ENCODE measurements at regions of chr11 and their contacts with region 1.

Region 1: GRCh38 chr11:95150946-95151684 is 61.5 kb downstream of the ENDOD1 start:
- DNase-seq: peak; percentile 96
- H3K4me3 Mint-ChIP-seq: peak overlapping the region; percentile 85
- H3K27ac Mint-ChIP-seq: peak overlapping the region; percentile 89
- H3K4me1 Mint-ChIP-seq: peaks cover 36% of the 10 kb centered on the region
- H3K27me3 Mint-ChIP-seq: peaks cover 5% of the 10 kb centered on the region

Region 2: DNA sequence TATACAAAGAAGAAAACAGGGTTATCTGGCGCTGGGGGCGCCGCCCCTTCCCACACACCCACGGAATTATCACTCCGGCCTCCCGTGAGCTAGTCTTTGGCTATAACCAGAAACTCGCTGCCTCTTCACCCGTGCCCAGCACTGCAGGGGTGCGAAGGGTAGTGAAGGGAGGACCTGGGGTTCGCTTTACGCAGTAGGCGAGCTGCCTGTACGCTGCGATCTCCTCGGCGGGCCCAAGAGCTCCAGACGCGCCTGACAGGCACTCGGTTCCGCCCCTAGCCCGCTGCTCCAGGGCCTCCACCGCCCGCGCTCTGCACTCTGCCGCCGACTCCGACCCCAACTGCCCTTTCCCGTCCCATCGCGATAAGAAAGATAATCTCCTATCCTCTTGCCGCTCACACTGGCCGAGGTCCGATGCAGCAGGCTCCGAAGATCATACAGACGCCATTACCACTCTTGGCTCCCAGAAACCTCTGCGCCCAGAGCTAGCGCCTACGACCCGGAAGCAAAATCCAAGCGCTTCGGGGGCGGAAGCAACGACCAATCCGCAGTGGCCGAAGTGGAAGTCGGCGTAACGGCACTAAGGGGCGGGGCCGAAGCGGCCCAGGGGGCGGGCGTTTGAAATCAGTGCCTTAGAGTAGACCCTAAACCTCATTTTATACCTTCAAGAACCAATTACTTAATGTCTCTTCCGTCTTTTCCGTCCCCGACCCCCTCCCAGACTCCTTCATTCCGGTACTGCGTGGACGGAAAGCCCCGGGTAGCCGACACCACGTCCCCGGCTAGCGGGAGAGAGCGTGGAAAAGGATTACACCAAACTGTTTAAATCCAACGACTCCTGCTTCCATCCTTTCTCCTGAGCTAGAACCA is 177.8 kb before region 1 on chr11 and contains the starts of genes CWC15 and KDM4D:
- CTCF ChIA-PET with region 1: no interaction called
- intact Hi-C with region 1: loop called (anchors 1 kb)
- DNase-seq: peak; percentile 97
- H3K4me3 Mint-ChIP-seq: peak within 1 kb of the TSS; percentile 97
- H3K27ac Mint-ChIP-seq: peak within 1 kb of the TSS; percentile 89
- H3K4me1 Mint-ChIP-seq: peaks cover 38% of the 10 kb centered on the region
- H3K27me3 Mint-ChIP-seq: no peaks in the 10 kb centered on the region
- total RNA-seq, gene CWC15: 70.6 to 72.3 TPM
- total RNA-seq, gene KDM4D: 1.7 to 2.1 TPM

Region 3: DNA sequence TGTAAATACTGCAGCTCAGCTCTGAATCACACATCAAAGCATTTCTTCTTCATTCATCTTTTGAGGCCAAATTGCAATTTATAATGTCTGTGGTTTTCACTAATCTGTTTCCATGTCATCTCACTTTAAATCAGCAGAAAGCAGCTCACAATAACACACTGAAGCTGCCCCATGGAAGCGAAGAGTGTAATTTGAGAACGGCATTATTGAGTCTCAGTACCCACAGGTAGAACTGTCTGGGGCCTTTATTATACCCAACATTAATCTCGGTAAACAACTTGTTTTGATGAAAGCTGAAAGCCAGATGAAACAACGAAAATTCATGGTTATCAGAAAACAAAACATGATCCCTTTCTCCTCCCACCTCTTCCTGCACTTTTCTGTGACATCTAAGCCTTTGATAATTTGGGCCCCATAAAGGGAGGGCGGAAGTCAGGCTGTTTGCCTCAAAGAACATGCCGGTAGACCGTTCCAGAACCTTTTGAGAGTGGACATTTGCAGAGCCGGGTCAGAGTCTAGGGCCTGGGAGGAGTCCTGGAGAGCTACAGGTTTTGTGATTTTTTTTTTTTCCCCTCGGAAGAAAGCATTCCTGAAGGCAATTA is 148.1 kb after region 1 on chr11:
- CTCF ChIA-PET with region 1: interaction called, 4 read pairs
- intact Hi-C with region 1: loop called (anchors 2 kb)
- DNase-seq: peak; percentile 24
- H3K4me3 Mint-ChIP-seq: no peak overlapping the region
- H3K27ac Mint-ChIP-seq: peak overlapping the region; percentile 37
- H3K4me1 Mint-ChIP-seq: peaks cover 31% of the 10 kb centered on the region
- H3K27me3 Mint-ChIP-seq: no peaks in the 10 kb centered on the region

Region 4: DNA sequence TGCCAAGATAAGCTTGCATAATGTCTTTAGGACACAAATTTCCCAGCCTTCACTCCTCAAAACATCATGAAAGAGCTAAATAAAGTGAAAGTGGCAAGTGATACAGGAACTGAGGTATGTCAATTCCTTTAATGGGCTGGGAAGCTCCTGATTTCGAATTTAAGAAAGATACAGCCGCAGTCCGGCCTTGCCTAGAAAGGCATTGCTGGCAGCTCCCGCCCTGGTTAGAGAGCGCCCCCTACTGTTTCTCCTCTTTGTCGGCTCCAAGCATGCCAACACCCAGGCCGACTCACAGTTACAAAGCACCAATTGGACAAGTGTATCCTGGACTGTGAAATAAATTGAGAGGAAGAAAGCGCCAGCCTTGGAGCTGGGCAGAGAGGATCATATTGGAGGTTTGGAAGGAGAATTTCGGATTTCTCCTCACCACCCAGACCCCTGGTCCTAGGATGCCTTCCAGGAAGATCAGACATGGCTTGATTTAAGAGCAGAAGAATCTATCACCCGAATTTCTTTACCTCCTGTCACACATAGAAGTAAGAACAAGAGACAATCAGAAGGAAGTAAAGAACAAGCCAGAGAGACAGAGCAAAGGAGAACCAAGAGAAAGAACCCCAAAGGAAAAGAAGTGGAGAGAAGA is 554.5 kb after region 1 on chr11:
- CTCF ChIA-PET with region 1: interaction called, 281 read pairs
- intact Hi-C with region 1: loop called (anchors 1 kb)
- DNase-seq: peak; percentile 95
- H3K4me3 Mint-ChIP-seq: no peak overlapping the region
- H3K27ac Mint-ChIP-seq: no peak overlapping the region
- H3K4me1 Mint-ChIP-seq: peaks cover 16% of the 10 kb centered on the region
- H3K27me3 Mint-ChIP-seq: no peaks in the 10 kb centered on the region

Region 5: DNA sequence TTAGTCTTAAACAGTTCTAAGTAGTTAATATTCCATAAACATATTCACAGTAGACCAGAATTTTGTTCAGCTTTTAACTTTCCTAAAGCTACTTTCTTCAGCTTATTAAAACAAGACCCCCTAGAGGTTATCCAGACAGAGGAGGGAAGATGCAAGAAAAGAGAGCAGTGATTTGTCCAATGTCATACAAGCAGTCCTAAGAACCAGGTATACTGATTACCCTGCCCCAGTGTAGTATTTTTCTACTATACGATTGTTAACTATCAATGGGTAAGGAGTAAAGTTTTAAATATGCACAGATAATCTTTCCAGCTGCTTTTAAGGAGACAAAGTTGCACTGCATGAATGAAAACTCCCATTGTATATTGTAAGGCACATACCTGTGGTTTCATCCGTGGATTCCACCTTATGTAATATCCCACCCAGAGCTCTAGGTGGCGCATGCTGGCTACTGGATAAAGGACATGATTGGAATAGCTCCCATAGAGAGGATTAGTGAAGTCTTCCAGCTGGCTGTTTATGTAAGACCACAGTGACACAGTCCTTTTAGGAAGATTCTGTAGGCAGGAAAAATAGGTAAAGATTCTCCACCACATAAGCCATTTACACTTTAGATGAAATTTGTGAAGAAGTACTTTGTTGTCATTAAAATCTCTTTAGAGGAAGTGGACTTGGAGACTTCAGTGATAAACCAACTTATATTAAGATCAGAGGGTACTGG is 684.8 kb after region 1 on chr11:
- CTCF ChIA-PET with region 1: no interaction called
- intact Hi-C with region 1: loop called (anchors 5 kb)
- DNase-seq: peak; percentile 77
- H3K4me3 Mint-ChIP-seq: no peak overlapping the region
- H3K27ac Mint-ChIP-seq: no peak overlapping the region
- H3K4me1 Mint-ChIP-seq: peaks cover 4% of the 10 kb centered on the region
- H3K27me3 Mint-ChIP-seq: no peaks in the 10 kb centered on the region

Region 6: GRCh38 chr11:96424693-96425092 is 1273.6 kb after region 1 on chr11:
- CTCF ChIA-PET with region 1: interaction called, 4 read pairs
- intact Hi-C with region 1: loop called (anchors 1 kb)
- DNase-seq: no peak
- H3K4me3 Mint-ChIP-seq: no peak overlapping the region
- H3K27ac Mint-ChIP-seq: no peak overlapping the region
- H3K4me1 Mint-ChIP-seq: peaks cover 4% of the 10 kb centered on the region
- H3K27me3 Mint-ChIP-seq: peaks cover 17% of the 10 kb centered on the region

Measured in activated naive CD4-positive, alpha-beta T cell treated with anti-CD3 and anti-CD28 coated beads for 36 hours (primary cell).